Calu3 (cell line): ENCODE measurements at regions of chr10 and their contacts with region 1.

Region 1: DNA sequence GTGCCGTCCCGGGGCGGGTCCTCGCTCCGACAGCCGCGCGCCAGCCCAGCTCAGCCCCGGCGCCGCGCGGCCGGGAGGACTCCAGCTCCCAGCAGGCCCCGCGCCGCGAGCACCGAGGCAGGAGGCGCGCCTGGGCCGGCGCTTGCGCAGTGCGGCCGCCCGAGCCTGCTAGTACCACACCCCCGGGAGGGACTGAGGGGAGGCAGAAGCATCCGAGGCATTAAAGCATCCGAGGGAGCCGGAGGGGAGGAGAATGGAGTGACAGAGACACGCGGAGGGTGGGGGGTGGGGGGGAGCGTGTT is at the start of gene GRK5:
- DNase-seq: peak; percentile 89
- H3K4me3 Mint-ChIP-seq: peak within 1 kb of the TSS; percentile 83
- H3K27ac Mint-ChIP-seq: peak within 1 kb of the TSS; percentile 98
- H3K4me1 Mint-ChIP-seq: peaks cover 19% of the 10 kb centered on the region
- H3K27me3 Mint-ChIP-seq: peaks cover 8% of the 10 kb centered on the region
- CTCF ChIP-seq: no peak
- total RNA-seq, gene GRK5: 2.4 and 4.4 TPM in 2 replicates

Region 2: GRCh38 chr10:119270762-119271366 is 63.5 kb after region 1 on chr10:
- CTCF ChIA-PET with region 1: interaction called, 3 read pairs
- intact Hi-C with region 1: loop called (anchors 10 kb)
- DNase-seq: peak; percentile 28
- H3K4me3 Mint-ChIP-seq: peak overlapping the region; percentile 37
- H3K27ac Mint-ChIP-seq: no peak overlapping the region
- H3K4me1 Mint-ChIP-seq: peaks cover 11% of the 10 kb centered on the region
- H3K27me3 Mint-ChIP-seq: no peaks in the 10 kb centered on the region
- CTCF ChIP-seq: no peak

Region 3: DNA sequence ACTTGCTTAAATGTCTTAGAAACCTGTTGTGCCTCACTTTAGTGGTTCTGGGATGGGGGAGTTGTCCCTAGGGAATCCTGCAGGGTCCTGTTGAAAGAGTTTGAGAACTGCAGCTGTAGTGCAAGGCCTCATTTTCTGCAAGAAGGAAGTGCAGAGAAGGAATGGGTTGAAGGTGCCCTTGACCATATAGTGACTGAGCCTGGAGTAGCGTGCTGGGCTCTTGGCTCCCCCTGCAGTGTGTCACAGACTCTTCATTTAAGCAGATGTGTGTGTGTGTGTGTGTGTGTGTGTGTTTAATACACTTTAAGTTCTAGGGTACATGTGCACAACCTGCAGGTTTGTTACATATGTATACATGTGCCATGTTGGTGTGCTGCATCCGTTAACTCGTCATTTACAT is 92.2 kb after region 1 on chr10:
- CTCF ChIA-PET with region 1: no interaction called
- intact Hi-C with region 1: no loop called
- DNase-seq: no peak
- H3K4me3 Mint-ChIP-seq: no peak overlapping the region
- H3K27ac Mint-ChIP-seq: no peak overlapping the region
- H3K4me1 Mint-ChIP-seq: no peaks in the 10 kb centered on the region
- H3K27me3 Mint-ChIP-seq: no peaks in the 10 kb centered on the region
- CTCF ChIP-seq: no peak